Activated B cell treated with CpG ODN at 0.5 μM for 24 hours (primary cell): ENCODE measurements at regions of chr6 and their contacts with region 1.

Region 1: DNA sequence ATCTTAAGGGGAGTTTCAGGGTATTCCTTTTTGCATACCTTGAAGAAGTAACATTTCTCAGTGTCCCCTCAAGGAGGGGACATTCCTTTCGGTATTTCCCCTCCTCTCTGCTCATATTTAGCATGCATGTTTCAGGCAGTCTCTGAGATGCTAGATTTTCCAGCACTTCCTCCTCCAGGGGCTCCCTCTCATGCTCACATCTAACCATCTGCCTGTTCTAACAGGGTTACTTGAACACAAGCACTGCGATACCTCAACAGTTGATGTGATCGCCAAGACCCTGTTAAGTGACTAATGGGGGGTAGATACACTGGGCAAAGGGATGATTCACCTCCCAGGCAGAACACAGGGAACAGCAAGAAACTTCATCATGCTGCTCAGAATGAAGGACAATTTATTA is 12.9 kb upstream of the MCM3 start:
- DNase-seq: no peak
- ATAC-seq: peak; percentile 38
- H3K4me3 Mint-ChIP-seq: peak overlapping the region; percentile 76
- H3K27ac Mint-ChIP-seq: peak overlapping the region; percentile 99
- H3K4me1 Mint-ChIP-seq: peaks cover 38% of the 10 kb centered on the region
- H3K27me3 Mint-ChIP-seq: no peaks in the 10 kb centered on the region
- CTCF ChIP-seq: no peak

Region 2: DNA sequence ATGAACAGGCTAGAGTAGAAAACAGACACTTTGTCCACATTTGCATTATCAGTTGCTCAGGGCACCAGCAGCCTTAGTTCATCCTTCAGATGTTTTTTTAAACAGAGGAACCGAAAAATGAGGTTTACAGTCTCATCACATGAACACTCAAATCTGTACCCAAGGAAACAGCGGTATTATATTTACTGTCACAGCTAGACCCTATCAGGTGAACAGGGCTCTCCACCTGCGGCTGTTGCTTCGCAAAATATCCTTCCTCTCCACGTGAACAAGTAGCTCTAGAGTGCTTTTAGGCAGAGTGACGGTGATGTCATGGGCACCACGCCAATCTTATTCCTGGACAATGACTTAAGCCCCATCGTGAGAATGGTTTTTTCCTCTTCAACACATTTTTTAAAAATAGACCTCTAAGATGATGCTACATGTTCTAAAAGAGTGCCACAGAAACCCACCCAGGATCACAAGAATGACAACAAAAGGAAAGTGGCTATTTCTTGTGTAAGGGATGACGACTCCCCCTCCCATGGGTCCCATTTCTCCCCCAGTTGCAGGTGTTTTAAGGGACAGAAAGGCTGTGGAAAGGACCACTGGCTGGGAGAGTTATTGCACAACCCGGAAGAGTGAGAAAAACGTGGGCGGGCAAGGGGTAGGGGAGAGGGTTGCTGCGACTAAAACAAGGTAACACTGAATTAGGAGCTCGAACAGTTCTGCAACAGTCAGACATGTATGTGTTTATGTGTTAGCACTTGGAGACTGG is 200.4 kb after region 1 on chr6:
- CTCF ChIA-PET with region 1: no interaction called
- POLR2A ChIA-PET with region 1: no interaction called
- intact Hi-C with region 1: loop called (anchors 5 kb)
- DNase-seq: peak; percentile 37
- ATAC-seq: peak; percentile 77
- H3K4me3 Mint-ChIP-seq: peak overlapping the region; percentile 60
- H3K27ac Mint-ChIP-seq: peak overlapping the region; percentile 98
- H3K4me1 Mint-ChIP-seq: peaks cover 66% of the 10 kb centered on the region
- H3K27me3 Mint-ChIP-seq: no peaks in the 10 kb centered on the region
- CTCF ChIP-seq: no peak